B cell (primary cell): ENCODE measurements at regions of chr20 and their contacts with region 1.

Region 1: GRCh38 chr20:62926239-62927104 is at the start of gene DIDO1:
- DNase-seq: peak; percentile 94
- ATAC-seq: peak; percentile 89
- H3K4me3 ChIP-seq: peak within 1 kb of the TSS; percentile 86 to 99 (median 96)
- H3K4me3 Mint-ChIP-seq: peak within 1 kb of the TSS; percentile 95
- H3K27ac ChIP-seq: peak within 1 kb of the TSS; percentile 79 to 92
- H3K27ac Mint-ChIP-seq: peak within 1 kb of the TSS; percentile 94
- H3K4me1 ChIP-seq: peaks cover 55 to 73% of the 10 kb centered on the region in 2 donors
- H3K4me1 Mint-ChIP-seq: peaks cover 75% of the 10 kb centered on the region
- H3K27me3 ChIP-seq: no peaks in the 10 kb centered on the region
- H3K27me3 Mint-ChIP-seq: no peaks in the 10 kb centered on the region
- CTCF ChIP-seq: peak; percentile 75
- total RNA-seq, gene DIDO1: 124 and 128 TPM in 2 replicates

Region 2: GRCh38 chr20:62861726-62862336 is 64.6 kb before region 1 on chr20 and contains the start of gene TCFL5:
- CTCF ChIA-PET with region 1: no interaction called
- POLR2A ChIA-PET with region 1: no interaction called
- intact Hi-C with region 1: loop called (anchors 5 kb)
- DNase-seq: peak; percentile 95
- ATAC-seq: peak; percentile 92
- H3K4me3 ChIP-seq: peak within 1 kb of the TSS in 3 of 5 experiments; percentile 33 to 47 (median 36)
- H3K4me3 Mint-ChIP-seq: peak within 1 kb of the TSS; percentile 81
- H3K27ac ChIP-seq: no peak within 1 kb of the TSS
- H3K27ac Mint-ChIP-seq: peak within 1 kb of the TSS; percentile 42
- H3K4me1 ChIP-seq: peaks cover 9 to 27% of the 10 kb centered on the region in 2 donors
- H3K4me1 Mint-ChIP-seq: peaks cover 20% of the 10 kb centered on the region
- H3K27me3 ChIP-seq: peaks cover 0 to 9% (median 6%) of the 10 kb centered on the region in 4 experiments
- H3K27me3 Mint-ChIP-seq: no peaks in the 10 kb centered on the region
- CTCF ChIP-seq: no peak
- total RNA-seq, gene TCFL5: 15.7 and 16.2 TPM in 2 replicates

Region 3: GRCh38 chr20:62893700-62894099 is 32.8 kb before region 1 on chr20:
- CTCF ChIA-PET with region 1: no interaction called
- POLR2A ChIA-PET with region 1: no interaction called
- intact Hi-C with region 1: no loop called
- DNase-seq: no peak
- ATAC-seq: no peak
- H3K4me3 ChIP-seq: no peak overlapping the region
- H3K4me3 Mint-ChIP-seq: no peak overlapping the region
- H3K27ac ChIP-seq: no peak overlapping the region
- H3K27ac Mint-ChIP-seq: no peak overlapping the region
- H3K4me1 ChIP-seq: peaks cover 0 to under 1% of the 10 kb centered on the region in 2 donors
- H3K4me1 Mint-ChIP-seq: peaks cover 8% of the 10 kb centered on the region
- H3K27me3 ChIP-seq: no peaks in the 10 kb centered on the region
- H3K27me3 Mint-ChIP-seq: no peaks in the 10 kb centered on the region
- CTCF ChIP-seq: no peak

Region 4: DNA sequence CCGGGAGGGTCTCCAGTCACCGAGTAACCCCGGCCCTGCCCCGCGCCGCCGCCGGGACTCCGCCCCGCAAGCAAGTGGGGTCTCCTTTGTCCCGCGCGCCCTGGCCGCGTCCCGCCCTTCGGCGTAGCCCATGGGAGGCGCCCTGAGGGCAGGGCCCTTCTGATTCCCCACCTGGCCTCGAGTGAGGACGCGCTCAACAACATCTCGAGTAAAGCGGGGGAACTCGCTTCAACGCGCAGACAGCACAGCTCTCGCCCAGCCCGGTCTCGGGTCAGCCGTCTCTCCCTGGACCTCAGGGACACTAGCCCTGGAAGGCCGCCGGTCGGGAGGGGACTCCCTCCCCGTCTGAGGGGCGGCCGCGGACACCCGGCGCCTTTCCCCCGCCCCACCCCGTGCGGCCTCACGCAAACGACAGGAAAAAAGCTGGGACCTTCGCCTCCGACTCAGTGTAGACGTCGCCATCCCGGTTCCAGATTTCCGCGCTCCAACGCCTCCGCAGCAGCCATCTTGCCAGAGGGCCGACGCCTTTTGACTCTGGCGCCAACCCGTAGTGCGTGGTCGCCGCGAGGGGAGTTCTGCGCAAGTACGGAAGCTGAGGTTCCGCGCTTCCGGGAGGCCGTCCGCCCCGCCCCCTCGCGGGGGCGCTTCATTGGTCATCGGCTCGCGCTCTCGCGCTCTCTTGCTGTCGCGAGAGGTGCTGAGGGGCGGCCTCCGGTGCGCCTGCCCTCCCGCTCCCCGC is 11.1 kb after region 1 on chr20:
- CTCF ChIA-PET with region 1: interaction called, 4 read pairs
- POLR2A ChIA-PET with region 1: interaction called, 24 read pairs
- intact Hi-C with region 1: loop called (anchors 1 kb)
- DNase-seq: peak; percentile 97
- ATAC-seq: peak; percentile 90
- H3K4me3 ChIP-seq: peak overlapping the region; percentile 53 to 100 (median 81)
- H3K4me3 Mint-ChIP-seq: peak overlapping the region; percentile 89
- H3K27ac ChIP-seq: peak overlapping the region; percentile 91 to 93
- H3K27ac Mint-ChIP-seq: peak overlapping the region; percentile 92
- H3K4me1 ChIP-seq: peaks cover 26 to 42% of the 10 kb centered on the region in 2 donors
- H3K4me1 Mint-ChIP-seq: peaks cover 36% of the 10 kb centered on the region
- H3K27me3 ChIP-seq: no peaks in the 10 kb centered on the region
- H3K27me3 Mint-ChIP-seq: no peaks in the 10 kb centered on the region
- CTCF ChIP-seq: no peak

Region 5: DNA sequence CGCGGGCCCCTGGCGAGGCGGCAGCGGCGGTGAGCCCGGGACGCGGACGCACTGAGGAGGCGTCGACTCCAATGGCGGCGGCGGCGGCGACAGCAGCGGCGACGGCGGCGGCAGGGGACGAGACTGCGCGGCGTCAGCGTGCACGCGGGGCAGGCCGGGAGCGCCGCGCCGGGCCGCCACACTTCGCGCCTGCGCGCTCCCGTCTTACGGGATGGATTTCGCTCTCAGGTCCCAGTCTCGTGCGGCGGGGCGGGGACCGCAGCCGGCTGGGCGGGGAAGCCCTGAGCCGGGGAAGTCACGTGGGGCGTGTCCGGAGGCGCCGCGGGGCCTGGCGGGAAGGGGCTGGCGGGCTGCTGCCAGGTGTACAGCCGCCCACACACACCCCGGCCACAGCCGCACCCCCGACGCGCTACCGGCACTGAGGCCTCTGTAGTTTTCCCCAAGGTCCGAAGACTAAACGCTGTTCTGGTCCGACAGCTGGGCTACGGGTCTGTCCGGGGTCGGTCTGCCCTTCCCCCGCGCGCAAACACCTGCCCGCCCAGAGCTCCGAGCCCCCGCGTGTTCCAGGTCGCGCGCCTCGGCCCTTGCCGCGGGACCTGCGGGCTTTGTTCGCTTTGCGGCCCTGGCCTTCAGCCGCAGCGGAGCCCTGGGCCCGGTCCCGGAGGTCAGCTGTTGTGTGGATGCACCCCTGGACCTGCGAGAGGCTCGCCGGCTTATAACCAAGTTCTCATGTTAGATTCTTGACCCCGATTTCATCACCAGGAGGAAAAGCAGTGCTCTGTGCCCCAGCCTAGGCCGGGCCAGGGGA is 289.8 kb after region 1 on chr20 and contains the start of gene YTHDF1:
- CTCF ChIA-PET with region 1: no interaction called
- POLR2A ChIA-PET with region 1: no interaction called
- intact Hi-C with region 1: loop called (anchors 5 kb)
- DNase-seq: peak; percentile 98
- ATAC-seq: peak; percentile 91
- H3K4me3 ChIP-seq: peak within 1 kb of the TSS in 4 of 5 experiments; percentile 57 to 80 (median 71)
- H3K4me3 Mint-ChIP-seq: peak within 1 kb of the TSS; percentile 88
- H3K27ac ChIP-seq: peak within 1 kb of the TSS; percentile 52 to 88
- H3K27ac Mint-ChIP-seq: peak within 1 kb of the TSS; percentile 88
- H3K4me1 ChIP-seq: peaks cover 16 to 30% of the 10 kb centered on the region in 2 donors
- H3K4me1 Mint-ChIP-seq: peaks cover 37% of the 10 kb centered on the region
- H3K27me3 ChIP-seq: peaks cover 0 to 7% (median 0%) of the 10 kb centered on the region in 4 experiments
- H3K27me3 Mint-ChIP-seq: peaks cover 8% of the 10 kb centered on the region
- CTCF ChIP-seq: no peak
- total RNA-seq, gene YTHDF1: 40.2 and 40.5 TPM in 2 replicates